ENCODE measurements at regions of chr22 and their contacts with region 1.

Region 1: DNA sequence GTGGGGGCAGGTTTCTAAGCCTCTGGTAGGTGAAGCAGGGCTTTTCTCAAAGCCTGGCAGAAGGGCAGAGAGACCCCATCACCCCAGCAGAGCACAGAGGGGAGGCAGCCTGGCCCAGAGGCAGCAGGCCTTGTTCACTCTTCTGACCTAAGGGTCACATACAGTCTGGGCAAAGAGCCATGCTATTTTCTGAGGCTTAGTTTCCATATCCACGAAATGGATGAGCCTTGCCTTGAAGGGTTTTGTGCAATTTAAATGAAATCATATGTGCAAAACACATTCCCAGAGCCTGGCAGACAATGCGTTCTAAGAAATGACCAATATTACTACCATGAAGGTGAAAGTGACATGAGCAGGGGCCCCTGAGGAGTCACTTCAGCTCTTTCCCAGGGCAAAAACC is 44.5 kb downstream of the HIRA start:
- DNase-seq: no peak
- ATAC-seq: no peak
- H3K4me3 ChIP-seq: no peak overlapping the region
- H3K27ac ChIP-seq: no peak overlapping the region
- H3K4me1 ChIP-seq: peaks cover 6% of the 10 kb centered on the region
- H3K27me3 ChIP-seq: no peaks in the 10 kb centered on the region
- CTCF ChIP-seq: no peak

Region 2: DNA sequence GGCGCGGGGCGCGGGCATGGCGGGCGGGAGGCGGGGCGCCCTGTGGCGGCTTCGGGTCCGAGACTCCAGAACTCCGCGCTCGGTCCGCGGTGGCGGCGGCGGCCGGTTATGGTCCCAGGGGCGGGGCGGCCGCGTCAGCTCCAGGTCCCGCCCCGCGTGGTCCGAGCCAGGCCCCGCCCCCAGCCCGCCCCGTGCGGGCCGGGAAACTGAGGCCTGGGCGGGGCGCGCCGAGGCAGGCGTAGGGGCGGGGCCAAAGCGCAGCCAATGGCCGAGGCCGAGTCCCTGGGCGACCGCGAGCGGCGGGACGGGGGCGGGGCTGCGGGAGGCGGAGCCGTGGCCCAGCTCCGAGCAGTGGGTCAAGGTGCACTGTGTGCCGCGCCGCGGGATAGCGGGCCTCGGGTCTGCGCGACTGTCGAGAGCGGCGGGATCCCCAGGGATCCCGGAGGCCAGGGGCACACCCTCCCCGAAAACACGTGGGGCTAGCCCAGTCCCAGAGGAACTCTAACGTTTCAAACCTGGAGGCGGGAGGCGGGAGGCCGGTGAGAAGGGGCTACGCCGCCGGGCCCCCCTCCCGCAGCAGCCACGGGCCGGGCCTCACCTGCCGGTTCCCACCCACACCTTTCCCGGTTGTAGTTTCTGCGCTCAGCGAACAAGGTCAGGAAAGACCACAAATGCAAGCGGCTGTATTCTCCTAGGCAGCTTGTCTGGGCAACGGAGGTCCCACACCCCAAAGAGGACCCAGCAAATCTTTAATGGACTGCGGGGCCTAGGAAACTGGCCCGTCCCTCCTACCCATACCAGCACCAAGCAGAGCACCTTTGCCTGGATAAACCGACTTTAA is 208.2 kb before region 1 on chr22 and contains the start of gene SLC25A1:
- intact Hi-C with region 1: loop called in 1 of 2 experiments (anchors 10 kb)
- DNase-seq: peak; percentile 93 to 95
- ATAC-seq: peak; percentile 68 to 86 (median 76)
- H3K4me3 ChIP-seq: peak within 1 kb of the TSS; percentile 73
- H3K27ac ChIP-seq: peak within 1 kb of the TSS; percentile 82
- H3K4me1 ChIP-seq: peaks cover 21% of the 10 kb centered on the region
- H3K27me3 ChIP-seq: no peaks in the 10 kb centered on the region
- CTCF ChIP-seq: no peak
- total RNA-seq, gene SLC25A1: 7.3 to 23.1 (median 13.0) TPM

Region 3: GRCh38 chr22:19228179-19228578 is 158.9 kb before region 1 on chr22:
- intact Hi-C with region 1: loop called in 1 of 2 experiments (anchors 10 kb)
- DNase-seq: no peak
- ATAC-seq: peak in 1 of 4 donors; percentile 21
- H3K4me3 ChIP-seq: no peak overlapping the region
- H3K27ac ChIP-seq: no peak overlapping the region
- H3K4me1 ChIP-seq: peaks cover 6% of the 10 kb centered on the region
- H3K27me3 ChIP-seq: no peaks in the 10 kb centered on the region
- CTCF ChIP-seq: no peak

Region 4: DNA sequence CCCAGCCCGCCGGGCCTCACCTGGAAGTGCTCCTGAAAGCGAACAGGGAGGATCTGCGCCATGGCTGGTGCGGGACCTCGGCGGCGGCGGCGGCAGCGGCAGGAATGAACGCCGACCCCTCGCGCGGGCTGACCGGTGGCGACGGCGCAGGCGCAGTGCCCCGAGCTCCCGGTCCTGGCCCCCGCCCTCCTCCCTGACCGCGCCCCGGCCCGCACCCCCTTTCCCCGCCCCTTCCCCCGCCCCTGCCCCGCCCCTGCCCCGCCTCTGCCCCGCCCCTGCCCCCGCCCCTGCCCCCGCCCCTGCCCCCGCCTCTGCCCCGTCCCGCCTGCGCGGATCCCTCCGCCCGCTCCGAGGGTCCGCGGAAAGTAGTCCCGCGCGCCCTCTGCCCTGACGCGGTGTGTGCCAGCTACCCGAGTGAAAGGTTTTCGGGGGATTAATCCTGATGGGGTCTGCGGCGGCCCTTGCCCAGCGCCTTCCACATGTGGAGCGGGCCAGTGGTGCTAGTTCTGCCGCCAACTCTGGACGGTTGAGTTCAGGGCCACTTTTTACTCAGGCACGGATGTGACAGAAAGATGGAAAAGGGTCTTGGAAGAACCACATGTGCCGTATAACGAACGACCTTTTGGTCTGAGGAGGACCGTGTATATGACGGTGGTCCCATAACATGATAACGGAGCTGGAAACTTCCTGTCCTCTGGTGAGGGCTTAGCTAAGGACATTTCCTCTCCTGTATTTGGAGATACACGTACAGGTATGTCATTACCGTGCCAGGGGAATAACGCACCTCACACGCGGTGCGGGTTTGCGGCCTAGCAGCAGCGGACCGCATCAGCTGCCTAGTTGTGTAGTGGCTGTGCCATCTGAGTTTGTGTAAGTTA is 95.2 kb before region 1 on chr22 and contains the start of gene CLTCL1:
- intact Hi-C with region 1: loop called in 1 of 2 experiments (anchors 5 kb)
- DNase-seq: peak; percentile 88 to 94
- ATAC-seq: peak; percentile 31 to 44 (median 36)
- H3K4me3 ChIP-seq: peak within 1 kb of the TSS; percentile 92
- H3K27ac ChIP-seq: peak within 1 kb of the TSS; percentile 97
- H3K4me1 ChIP-seq: peaks cover 37% of the 10 kb centered on the region
- H3K27me3 ChIP-seq: no peaks in the 10 kb centered on the region
- CTCF ChIP-seq: no peak
- total RNA-seq, gene CLTCL1: 92.6 to 253 (median 126) TPM

Region 5: GRCh38 chr22:19325296-19325948 is 61.6 kb before region 1 on chr22:
- intact Hi-C with region 1: no loop called
- DNase-seq: no peak
- ATAC-seq: peak; percentile 30 to 67 (median 50)
- H3K4me3 ChIP-seq: no peak overlapping the region
- H3K27ac ChIP-seq: no peak overlapping the region
- H3K4me1 ChIP-seq: no peaks in the 10 kb centered on the region
- H3K27me3 ChIP-seq: no peaks in the 10 kb centered on the region
- CTCF ChIP-seq: no peak

Region 6: DNA sequence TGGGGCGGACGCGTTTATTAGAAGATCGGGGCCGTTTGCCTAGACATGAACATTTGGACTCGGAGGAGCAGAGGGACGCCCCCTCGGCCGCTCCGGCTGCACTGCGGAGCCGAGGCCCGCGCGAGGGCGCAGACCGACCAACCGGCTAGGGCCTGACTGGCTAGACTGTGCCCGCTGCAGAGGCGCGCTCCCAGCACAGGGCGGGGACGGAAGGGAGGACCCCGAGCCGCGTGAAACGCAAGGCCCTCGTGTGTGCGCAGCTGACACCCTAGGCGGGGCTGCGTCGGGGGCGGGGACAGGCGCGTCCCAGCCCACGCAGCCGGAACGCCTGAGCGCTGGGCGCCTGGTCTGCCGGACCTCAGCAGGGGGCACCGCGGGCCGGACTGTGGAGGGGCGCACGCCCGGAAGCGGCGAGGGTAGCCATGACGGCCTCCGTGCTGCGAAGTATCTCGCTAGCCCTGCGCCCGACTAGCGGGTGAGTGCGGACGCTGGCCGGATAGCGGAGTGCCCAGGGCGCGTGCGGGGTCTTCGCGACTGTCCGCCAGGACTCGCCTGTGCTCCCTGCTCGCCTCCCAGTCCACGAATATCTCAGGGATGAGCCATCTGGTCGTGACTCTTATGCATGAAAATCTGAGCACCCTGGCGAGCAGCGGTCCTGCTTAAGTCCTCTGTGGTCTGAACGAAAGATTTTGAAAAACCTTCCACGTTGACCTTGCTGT is 45.3 kb after region 1 on chr22 and contains the start of gene MRPL40:
- intact Hi-C with region 1: no loop called
- DNase-seq: peak; percentile 97 to 98
- ATAC-seq: peak; percentile 91 to 96 (median 92)
- H3K4me3 ChIP-seq: peak within 1 kb of the TSS; percentile 97
- H3K27ac ChIP-seq: peak within 1 kb of the TSS; percentile 96
- H3K4me1 ChIP-seq: peaks cover 30% of the 10 kb centered on the region
- H3K27me3 ChIP-seq: no peaks in the 10 kb centered on the region
- CTCF ChIP-seq: peak; percentile 8
- total RNA-seq, gene MRPL40: 53.7 to 70.5 (median 58.2) TPM

Region 7: DNA sequence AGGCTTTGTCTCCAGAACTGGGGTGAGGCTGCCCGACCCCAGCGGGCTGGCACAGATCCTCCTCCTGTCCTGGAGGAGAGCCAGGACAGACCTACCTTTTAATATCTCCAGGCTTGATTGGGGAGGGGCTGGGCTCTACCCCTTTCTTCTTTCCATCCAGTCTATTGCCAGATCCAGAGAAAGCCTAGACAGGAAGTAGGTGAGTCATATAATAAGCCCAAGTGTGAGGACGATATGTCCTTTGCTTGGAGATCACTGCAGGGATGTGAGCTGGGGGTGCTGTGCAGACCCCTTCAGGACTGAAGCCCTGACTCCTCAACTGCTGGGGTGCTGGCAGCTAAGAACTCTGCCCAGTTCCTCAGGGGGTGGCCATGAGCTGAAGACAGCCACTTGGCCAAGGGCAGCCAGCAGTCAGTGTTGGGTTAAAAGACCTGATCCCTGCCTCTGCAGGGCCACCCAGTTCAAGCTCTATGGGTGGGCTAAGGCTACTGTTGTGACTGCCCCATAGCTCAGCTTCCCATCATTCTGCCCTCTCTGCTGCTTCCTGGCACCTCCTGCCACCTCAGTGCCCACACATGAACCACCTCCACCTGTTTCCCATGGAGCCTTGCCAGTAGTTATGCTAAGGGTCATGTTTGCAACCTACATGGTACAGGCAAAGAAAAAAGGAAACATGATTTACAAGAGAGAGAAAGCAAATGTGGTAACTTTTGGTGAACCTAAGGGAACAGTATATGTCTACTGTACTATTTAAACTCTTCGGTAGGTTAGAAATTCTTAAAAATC is 68.7 kb after region 1 on chr22:
- intact Hi-C with region 1: loop called in 1 of 2 experiments (anchors 10 kb)
- DNase-seq: no peak
- ATAC-seq: peak in 3 of 4 donors; percentile 47 to 68 (median 51)
- H3K4me3 ChIP-seq: no peak overlapping the region
- H3K27ac ChIP-seq: no peak overlapping the region
- H3K4me1 ChIP-seq: no peaks in the 10 kb centered on the region
- H3K27me3 ChIP-seq: no peaks in the 10 kb centered on the region
- CTCF ChIP-seq: no peak

Region 8: GRCh38 chr22:19629720-19630419 is 242.8 kb after region 1 on chr22:
- intact Hi-C with region 1: loop called in 1 of 2 experiments (anchors 10 kb)
- DNase-seq: peak; percentile 73 to 81
- ATAC-seq: peak; percentile 84 to 96 (median 90)
- H3K4me3 ChIP-seq: no peak overlapping the region
- H3K27ac ChIP-seq: no peak overlapping the region
- H3K4me1 ChIP-seq: no peaks in the 10 kb centered on the region
- H3K27me3 ChIP-seq: peaks cover 0 to 9% (median 3%) of the 10 kb centered on the region in 3 donors
- CTCF ChIP-seq: peak; percentile 92

Measured in psoas muscle (tissue), 8 donors.